WTC11 (cell line): ENCODE measurements at regions of chr21 and their contacts with region 1.

Region 1: DNA sequence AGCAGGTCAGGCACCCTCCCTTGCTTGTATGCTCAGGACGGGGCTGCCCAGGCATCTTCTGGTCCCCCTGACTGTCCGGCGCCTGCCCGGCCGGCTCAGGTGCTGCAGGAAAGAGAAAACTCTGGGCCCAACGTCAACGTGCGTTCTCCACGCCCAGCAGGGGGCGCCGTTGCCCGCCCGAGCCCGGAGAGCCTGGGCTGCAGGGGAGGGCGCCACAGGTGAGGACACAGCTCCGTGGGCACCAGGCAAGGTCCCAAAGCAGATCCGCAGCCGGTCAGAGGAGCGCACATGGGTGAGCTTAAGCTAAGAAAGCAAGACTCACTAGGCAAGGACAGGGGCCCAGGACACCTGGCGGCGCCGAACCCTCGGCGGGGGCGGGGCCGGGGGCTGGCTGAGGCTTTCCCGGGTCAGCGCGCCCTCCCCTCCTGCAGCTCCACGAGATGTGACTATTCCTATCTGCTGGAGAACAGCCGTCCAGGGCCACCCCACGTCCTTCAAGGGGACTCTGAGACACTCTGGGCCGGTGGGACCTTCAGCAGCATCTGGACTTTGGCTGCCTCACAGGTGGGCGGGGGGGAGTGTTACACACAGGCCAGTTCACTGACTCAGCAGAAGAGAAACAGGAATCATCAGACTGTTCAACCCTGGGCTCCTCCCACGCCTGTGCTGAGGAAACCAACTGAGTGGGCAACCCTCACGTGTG is 29.3 kb downstream of the KRTAP10-1 start:
- DNase-seq: peak; percentile 82
- ATAC-seq: peak; percentile 86
- H3K4me3 Mint-ChIP-seq: no peak overlapping the region
- H3K27ac Mint-ChIP-seq: no peak overlapping the region
- H3K4me1 Mint-ChIP-seq: no peaks in the 10 kb centered on the region; the same call in 1 of the 2 replicates
- H3K27me3 Mint-ChIP-seq: no peaks in the 10 kb centered on the region
- CTCF ChIP-seq: peak; percentile 90

Region 2: DNA sequence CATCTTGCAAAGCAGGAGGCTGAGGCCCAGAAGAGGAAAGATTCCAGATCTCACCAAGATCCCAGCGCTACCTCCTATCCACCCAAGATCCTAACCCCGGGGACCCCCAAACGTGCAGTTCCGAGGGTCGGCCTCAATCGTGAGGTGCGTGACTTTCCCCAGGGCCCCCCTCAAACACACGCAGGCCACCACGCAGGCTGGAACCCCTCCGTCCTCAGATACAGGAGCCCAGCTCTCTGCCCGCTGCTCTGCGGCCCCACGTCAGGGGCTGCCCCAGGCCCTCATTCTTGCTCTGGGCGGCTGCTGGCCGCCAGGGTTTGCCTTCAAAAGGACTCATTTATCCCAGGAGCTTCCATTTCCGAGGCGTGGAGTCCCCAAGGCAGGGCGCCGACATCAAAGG is 10.5 kb before region 1 on chr21:
- CTCF ChIA-PET with region 1: interaction called, 15 read pairs
- POLR2A ChIA-PET with region 1: interaction called, 3 read pairs
- DNase-seq: no peak
- ATAC-seq: no peak
- H3K4me3 Mint-ChIP-seq: no peak overlapping the region
- H3K27ac Mint-ChIP-seq: no peak overlapping the region
- H3K4me1 Mint-ChIP-seq: peaks cover 27% of the 10 kb centered on the region
- H3K27me3 Mint-ChIP-seq: no peaks in the 10 kb centered on the region
- CTCF ChIP-seq: no peak

Region 3: DNA sequence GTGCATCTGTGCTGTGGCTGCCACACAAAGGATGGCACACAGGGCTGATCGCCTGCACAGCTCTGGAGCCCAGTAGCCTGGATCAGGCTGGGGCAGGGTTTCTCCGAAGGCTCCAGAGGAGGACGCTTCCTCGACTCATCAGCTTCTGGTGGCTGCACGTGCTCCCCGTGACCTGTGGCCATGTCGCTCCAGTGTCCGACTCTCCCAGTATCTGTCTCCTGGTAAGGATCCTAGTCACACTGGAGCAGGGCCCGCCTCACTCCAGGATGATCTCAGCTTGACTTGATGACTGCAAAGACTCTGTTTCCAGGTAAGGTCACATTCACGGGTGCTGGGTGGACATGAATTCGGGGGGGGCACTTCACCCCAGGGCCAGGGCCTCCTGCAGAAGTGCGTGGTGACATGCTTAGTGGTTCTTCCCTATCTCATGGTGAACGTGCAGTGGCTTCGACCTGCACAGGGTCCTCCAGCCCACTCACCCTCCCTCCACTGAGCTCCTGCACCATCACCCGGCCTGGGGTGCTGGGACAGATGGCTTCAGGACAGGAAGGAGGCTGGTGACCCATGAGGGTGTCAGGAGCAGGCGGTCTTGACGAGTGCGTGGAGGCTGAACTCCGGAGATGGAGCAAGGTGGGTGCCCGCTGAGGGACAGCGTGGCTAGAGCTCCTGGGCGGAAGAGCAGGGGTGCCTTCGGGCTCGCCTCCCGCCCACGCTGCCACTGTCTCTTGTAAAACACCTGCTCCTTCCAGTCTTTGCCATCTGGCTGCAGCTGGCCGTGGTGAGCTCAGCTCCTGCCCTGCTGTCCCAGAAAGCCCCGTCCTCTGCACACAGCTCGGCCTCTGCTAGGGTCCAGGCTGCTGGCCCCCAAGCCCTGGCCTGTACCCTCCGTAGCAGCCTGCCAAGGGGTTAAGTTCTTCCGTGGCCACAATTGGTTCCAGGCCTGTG is 20.8 kb after region 1 on chr21:
- CTCF ChIA-PET with region 1: interaction called, 13 read pairs
- POLR2A ChIA-PET with region 1: no interaction called
- DNase-seq: peak; percentile 6
- ATAC-seq: no peak
- H3K4me3 Mint-ChIP-seq: no peak overlapping the region
- H3K27ac Mint-ChIP-seq: no peak overlapping the region
- H3K4me1 Mint-ChIP-seq: peaks cover 2% of the 10 kb centered on the region; the same call in 1 of the 2 replicates
- H3K27me3 Mint-ChIP-seq: no peaks in the 10 kb centered on the region
- CTCF ChIP-seq: no peak

Region 4: DNA sequence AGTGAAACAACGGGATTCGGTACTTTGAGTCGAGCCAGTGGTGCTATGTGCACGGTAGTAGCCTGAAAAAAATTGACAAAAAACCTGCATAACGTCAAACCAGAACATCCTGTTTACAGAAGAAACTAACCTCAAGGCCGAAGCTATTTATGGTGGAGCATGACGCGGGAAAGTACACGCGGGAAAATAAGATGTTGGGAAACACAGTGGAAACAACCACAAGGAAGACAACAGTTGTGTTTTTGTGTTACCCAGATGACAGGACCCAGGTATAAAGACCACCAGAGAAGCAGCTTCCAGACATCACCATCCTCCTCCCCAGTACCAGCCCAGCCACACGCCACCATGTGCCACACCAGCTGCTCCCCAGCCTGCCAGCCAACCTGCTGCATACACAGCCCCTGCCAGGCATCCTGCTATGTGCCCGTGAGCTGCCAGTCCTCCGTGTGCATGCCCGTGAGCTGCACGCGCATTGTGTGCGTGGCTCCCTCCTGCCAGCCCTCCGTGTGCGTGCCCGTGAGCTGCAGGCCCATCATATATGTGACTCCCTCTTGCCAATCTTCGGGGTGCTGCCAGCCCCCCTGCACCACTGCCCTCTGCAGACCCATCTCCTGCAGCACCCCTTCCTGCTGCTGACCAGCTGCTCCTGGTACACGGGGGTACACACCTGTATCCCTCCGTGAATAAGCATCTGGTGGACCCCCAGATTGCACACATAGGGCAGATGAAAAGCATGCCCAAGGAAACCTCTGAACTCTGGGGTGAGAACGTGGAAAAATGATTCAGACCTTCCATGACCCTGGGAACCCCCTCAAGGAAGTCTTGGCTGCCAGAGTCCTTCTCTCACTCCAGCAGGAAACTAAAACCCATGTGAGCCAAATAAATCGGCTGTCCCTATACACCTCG is 147.2 kb after region 1 on chr21 and contains the start of gene KRTAP12-3:
- CTCF ChIA-PET with region 1: no interaction called
- POLR2A ChIA-PET with region 1: no interaction called
- DNase-seq: no peak
- ATAC-seq: no peak
- H3K4me3 Mint-ChIP-seq: no peak within 1 kb of the TSS
- H3K27ac Mint-ChIP-seq: peak within 1 kb of the TSS; percentile 69
- H3K4me1 Mint-ChIP-seq: peaks cover 39% of the 10 kb centered on the region
- H3K27me3 Mint-ChIP-seq: peaks cover 8% of the 10 kb centered on the region
- CTCF ChIP-seq: no peak
- total RNA-seq, gene KRTAP12-3: not detected in 3 replicates

Region 5: DNA sequence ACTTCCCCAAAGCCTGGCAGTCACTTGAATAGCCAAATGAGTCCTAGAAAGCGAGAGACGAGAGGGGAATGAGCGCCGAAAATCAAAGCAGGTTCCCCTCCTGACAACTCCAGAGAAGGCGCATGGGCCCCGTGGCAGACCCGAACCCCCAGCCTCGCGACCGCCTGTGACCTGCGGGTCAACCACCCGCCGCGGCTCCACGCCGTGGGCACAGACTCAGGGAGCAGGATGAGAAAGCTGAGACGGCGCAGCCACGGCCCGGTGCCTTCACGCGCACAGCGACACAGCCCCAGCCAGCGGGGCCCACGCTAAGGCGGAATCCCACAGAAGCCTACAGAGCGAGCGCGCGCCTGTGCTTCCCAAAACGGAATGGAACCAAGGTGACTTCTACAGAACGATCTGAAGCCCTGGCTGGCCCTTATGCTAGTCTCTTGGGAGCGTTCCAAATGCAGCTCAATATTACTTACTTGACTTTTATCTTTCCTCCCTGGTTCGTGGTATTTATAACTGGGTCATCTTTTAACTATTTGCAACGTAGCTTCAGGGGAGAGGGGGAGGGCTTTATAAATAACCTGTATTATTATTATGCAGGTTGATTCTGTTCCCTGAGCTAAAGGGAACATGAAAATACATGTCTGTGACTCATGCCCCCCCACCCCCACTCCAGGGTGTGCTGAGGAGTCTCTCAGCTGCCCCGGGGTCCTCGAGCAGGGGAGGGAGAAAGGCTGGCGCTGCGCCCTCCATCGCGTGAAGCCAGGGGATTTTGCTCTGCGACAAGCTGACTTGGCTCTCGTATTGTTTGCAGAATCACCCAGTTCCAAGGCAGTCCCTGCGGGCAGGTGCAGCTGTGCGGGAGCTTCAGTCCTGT is 199.0 kb after region 1 on chr21:
- CTCF ChIA-PET with region 1: interaction called, 12 read pairs
- POLR2A ChIA-PET with region 1: no interaction called
- DNase-seq: no peak
- ATAC-seq: no peak
- H3K4me3 Mint-ChIP-seq: peak overlapping the region; percentile 63
- H3K27ac Mint-ChIP-seq: peak overlapping the region; percentile 89; the same call in 1 of the 2 replicates
- H3K4me1 Mint-ChIP-seq: peaks cover 75% of the 10 kb centered on the region
- H3K27me3 Mint-ChIP-seq: peaks cover 86% of the 10 kb centered on the region
- CTCF ChIP-seq: no peak

Region 6: DNA sequence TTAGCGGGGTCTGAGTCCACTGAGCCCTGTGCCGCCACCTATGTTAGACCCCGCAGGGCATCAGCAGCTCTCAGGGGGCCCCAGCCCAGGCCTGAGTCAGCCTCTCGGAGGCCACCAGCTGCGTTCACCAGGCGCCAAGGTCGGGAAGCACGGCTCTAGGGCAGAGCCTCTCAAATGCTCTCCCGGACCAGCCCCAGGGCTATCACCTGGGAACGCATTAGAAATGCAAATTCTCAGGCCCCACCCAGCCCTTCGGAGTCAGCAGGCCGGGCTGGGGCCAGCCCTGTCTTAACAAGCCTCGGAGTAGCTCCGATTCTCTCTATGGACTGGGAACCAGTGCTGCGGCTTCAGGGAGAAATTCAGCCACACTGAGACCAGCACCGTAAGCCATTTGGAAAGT is 238.0 kb after region 1 on chr21:
- CTCF ChIA-PET with region 1: interaction called, 17 read pairs
- POLR2A ChIA-PET with region 1: no interaction called
- DNase-seq: peak; percentile 84
- ATAC-seq: peak; percentile 93
- H3K4me3 Mint-ChIP-seq: peak overlapping the region; percentile 75
- H3K27ac Mint-ChIP-seq: peak overlapping the region; percentile 99
- H3K4me1 Mint-ChIP-seq: peaks cover 54% of the 10 kb centered on the region
- H3K27me3 Mint-ChIP-seq: peaks cover 22% of the 10 kb centered on the region
- CTCF ChIP-seq: no peak

Region 7: GRCh38 chr21:44801468-44802395 is 291.1 kb after region 1 on chr21 and contains the start of gene UBE2G2:
- CTCF ChIA-PET with region 1: interaction called, 13 read pairs
- POLR2A ChIA-PET with region 1: no interaction called
- DNase-seq: peak; percentile 71
- ATAC-seq: peak; percentile 73
- H3K4me3 Mint-ChIP-seq: peak within 1 kb of the TSS; percentile 93
- H3K27ac Mint-ChIP-seq: peak within 1 kb of the TSS; percentile 91
- H3K4me1 Mint-ChIP-seq: peaks cover 29% of the 10 kb centered on the region
- H3K27me3 Mint-ChIP-seq: no peaks in the 10 kb centered on the region
- CTCF ChIP-seq: no peak
- total RNA-seq, gene UBE2G2: 109 to 117 TPM (median 113 TPM) in 3 replicates